Activated B cell treated with CpG ODN at 0.5 μM for 24 hours (primary cell): ENCODE measurements at regions of chr1 and their contacts with region 1.

Region 1: GRCh38 chr1:234676103-234676594 is 66.2 kb upstream of the IRF2BP2 start:
- DNase-seq: peak; percentile 41
- ATAC-seq: peak; percentile 92
- H3K4me3 Mint-ChIP-seq: peak overlapping the region; percentile 87
- H3K27ac Mint-ChIP-seq: peak overlapping the region; percentile 54
- H3K4me1 Mint-ChIP-seq: peaks cover 14% of the 10 kb centered on the region
- H3K27me3 Mint-ChIP-seq: no peaks in the 10 kb centered on the region
- CTCF ChIP-seq: no peak

Region 2: GRCh38 chr1:234722904-234723720 is 47.0 kb after region 1 on chr1:
- CTCF ChIA-PET with region 1: no interaction called
- POLR2A ChIA-PET with region 1: no interaction called
- intact Hi-C with region 1: loop called (anchors 5 kb)
- DNase-seq: no peak
- ATAC-seq: peak; percentile 41
- H3K4me3 Mint-ChIP-seq: peak overlapping the region; percentile 67
- H3K27ac Mint-ChIP-seq: peak overlapping the region; percentile 71
- H3K4me1 Mint-ChIP-seq: peaks cover 46% of the 10 kb centered on the region
- H3K27me3 Mint-ChIP-seq: no peaks in the 10 kb centered on the region
- CTCF ChIP-seq: no peak